ENCODE measurements at regions of chr17 and their contacts with region 1.

Region 1: GRCh38 chr17:35373534-35373983 is at the start of gene SLFN11:
- DNase-seq: peak; percentile 79 to 95
- H3K4me3 ChIP-seq: peak within 1 kb of the TSS; percentile 78 to 87
- H3K27ac ChIP-seq: peak within 1 kb of the TSS; percentile 97
- H3K4me1 ChIP-seq: peaks cover 0 to 10% of the 10 kb centered on the region in 2 donors
- H3K27me3 ChIP-seq: no peaks in the 10 kb centered on the region
- CTCF ChIP-seq: no peak
- total RNA-seq, gene SLFN11: 30.3 TPM

Region 2: DNA sequence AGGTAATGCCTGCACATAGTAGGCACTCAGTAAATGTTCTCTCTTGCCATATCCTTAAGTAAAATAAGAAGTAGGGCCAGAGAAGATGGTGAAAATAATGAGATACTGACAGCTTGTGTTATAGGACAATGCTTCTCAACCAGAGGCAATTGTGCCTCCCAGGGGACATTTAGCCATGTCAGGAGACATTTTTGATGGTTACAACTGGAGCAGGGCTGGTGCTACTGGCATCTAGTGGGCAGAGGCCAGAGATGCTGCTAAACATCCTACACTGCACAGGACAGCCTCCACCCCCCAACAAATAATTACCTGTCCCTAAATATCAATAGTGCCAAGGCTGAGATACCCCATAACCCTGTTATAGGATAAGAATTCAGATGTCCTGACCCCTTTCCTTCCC is 255.6 kb before region 1 on chr17:
- intact Hi-C with region 1: no loop called
- DNase-seq: no peak
- H3K4me3 ChIP-seq: no peak overlapping the region
- H3K27ac ChIP-seq: no peak overlapping the region
- H3K4me1 ChIP-seq: peaks cover 4 to 17% of the 10 kb centered on the region in 2 donors
- H3K27me3 ChIP-seq: no peaks in the 10 kb centered on the region
- CTCF ChIP-seq: no peak

Region 3: GRCh38 chr17:35312790-35313711 is 60.5 kb before region 1 on chr17:
- intact Hi-C with region 1: loop called (anchors 5 kb)
- DNase-seq: peak; percentile 33 to 69
- H3K4me3 ChIP-seq: peak overlapping the region; percentile 41 to 61
- H3K27ac ChIP-seq: peak overlapping the region in 1 of 2 donors; percentile 61
- H3K4me1 ChIP-seq: peaks cover 3 to 18% of the 10 kb centered on the region in 2 donors
- H3K27me3 ChIP-seq: no peaks in the 10 kb centered on the region
- CTCF ChIP-seq: peak; percentile 63 to 82 (median 78)

Region 4: DNA sequence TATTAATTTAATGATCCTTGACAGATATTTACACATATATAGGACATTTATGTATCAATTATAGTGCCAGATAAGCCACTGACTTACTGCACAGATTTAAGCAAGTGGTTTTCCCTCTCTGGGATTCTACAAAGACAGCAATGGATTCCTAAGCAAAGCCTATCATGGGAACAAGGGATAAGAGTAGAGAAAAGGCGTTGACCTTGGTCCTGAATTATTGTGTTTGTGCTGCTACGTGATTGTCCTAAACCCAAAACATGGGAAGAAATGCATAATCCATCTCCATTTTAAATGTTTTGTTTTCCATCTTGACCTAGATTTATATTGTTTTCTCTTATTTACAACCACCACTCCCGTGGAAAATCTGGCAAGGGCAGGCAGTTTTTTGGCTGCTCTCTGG is 14.2 kb before region 1 on chr17:
- intact Hi-C with region 1: no loop called
- DNase-seq: no peak
- H3K4me3 ChIP-seq: no peak overlapping the region
- H3K27ac ChIP-seq: no peak overlapping the region
- H3K4me1 ChIP-seq: no peaks in the 10 kb centered on the region
- H3K27me3 ChIP-seq: no peaks in the 10 kb centered on the region
- CTCF ChIP-seq: no peak

Region 5: DNA sequence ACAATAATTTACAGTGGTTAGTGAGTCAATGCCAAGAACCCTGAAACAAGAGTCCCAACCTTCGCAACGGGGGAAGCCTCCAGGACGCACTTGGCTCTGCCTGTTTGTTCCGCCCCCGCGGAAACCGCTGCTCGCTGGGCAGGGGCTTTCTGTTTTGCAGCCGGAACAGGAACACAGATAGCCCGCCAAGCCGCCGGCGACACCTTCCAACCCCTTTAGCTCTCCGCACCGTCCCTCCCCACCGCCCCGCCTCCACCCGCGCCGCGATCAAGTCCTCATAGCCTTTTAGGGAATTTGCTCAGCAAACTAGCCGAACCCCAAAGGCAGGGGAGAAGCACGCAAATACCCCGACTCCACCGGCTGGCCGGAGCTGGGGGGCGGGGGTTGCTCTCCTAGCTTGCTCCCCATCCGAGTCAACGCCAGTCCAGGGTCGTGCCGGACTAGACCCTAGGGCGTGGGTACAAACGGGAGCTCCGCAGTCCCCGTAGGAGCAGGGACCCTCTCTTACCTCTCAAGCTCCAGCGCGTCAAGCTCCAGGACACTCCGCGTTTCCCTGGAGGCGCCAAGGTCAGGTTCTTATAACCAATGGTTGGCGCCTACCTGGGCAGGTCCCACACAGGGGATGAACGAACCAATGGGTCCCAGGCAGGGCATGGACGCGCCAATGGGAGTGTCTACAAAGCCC is 74.8 kb after region 1 on chr17 and contains the start of gene SLFN13:
- intact Hi-C with region 1: loop called (anchors 5 kb)
- DNase-seq: peak; percentile 57 to 85
- H3K4me3 ChIP-seq: peak within 1 kb of the TSS; percentile 69 to 96
- H3K27ac ChIP-seq: peak within 1 kb of the TSS; percentile 42 to 71
- H3K4me1 ChIP-seq: peaks cover 0 to 9% of the 10 kb centered on the region in 2 donors
- H3K27me3 ChIP-seq: no peaks in the 10 kb centered on the region
- CTCF ChIP-seq: no peak
- total RNA-seq, gene SLFN13: 7.1 TPM

Region 6: GRCh38 chr17:35529866-35530265 is 156.3 kb after region 1 on chr17:
- intact Hi-C with region 1: no loop called
- DNase-seq: no peak
- H3K4me3 ChIP-seq: no peak overlapping the region
- H3K27ac ChIP-seq: no peak overlapping the region
- H3K4me1 ChIP-seq: no peaks in the 10 kb centered on the region
- H3K27me3 ChIP-seq: no peaks in the 10 kb centered on the region
- CTCF ChIP-seq: no peak

Measured in ascending aorta (tissue), 2 donors.